ENCODE measurements at regions of chr13 and their contacts with region 1.

Region 1: DNA sequence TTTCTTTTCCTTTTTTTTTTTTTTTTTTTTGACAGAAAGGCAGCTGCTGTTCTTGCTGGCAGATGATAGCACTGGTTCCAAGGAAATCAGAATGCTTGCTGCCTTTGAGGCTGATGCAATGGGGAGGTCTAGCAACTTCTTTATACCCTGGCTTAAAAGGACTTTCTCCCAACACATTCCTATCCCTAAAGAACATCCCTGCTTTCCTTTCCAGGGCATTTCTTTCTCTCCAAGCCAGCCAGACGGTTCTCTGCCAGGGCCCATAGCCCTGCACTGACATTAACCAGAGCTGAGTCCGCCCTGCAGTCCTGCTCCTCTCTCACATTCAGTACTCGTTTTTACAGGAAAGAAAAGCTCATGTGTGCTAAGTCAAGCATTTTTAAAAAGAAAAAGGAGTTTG is 133.9 kb upstream of the WASF3 start:
- DNase-seq: peak; percentile 72
- ATAC-seq: peak; percentile 93

Region 2: DNA sequence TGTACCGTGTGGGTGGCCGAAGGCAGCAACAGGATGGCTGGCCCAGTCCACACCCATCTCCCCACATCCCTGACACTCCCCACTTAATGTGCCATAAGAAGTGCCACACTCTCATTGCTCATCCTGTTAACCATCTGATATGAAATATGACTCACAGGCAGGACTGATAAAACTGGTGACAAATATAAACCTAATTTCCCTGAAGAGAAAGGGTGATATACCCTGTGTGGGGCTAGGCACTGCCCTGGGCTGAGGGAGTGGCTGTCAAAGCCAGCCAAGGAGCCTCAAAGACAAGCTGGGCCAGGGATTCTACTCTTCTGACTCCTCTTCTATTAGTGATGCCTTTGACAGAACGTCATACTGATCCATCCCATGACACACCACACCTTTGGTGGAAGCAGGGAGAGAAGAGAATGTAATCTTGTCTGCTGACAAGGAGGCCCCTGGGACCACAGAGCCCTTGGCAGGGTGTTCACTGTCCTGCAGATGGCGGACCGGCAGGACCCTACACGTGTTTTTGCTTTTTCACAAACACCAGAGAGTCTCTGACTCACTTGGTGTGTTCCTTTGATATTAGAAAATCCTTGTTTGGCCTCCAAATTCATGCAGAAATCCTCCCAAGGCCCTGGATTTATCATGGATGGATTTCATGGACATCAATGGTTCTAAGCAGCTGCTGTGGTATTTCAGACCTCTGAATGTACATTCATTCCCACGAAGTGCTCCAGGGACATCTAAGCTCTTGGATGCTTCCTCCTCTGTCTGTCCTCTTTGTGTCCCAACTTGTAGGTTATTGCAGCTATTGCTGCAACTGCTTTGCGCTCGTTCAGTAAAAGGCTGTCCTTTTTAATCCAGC is 35.9 kb after region 1 on chr13:
- intact Hi-C with region 1: loop called (anchors 5 kb)
- DNase-seq: peak; percentile 80
- ATAC-seq: peak; percentile 74

Region 3: GRCh38 chr13:26628706-26629105 is 205.1 kb after region 1 on chr13:
- intact Hi-C with region 1: no loop called
- DNase-seq: peak; percentile 61
- ATAC-seq: peak; percentile 59

Region 4: GRCh38 chr13:26965952-26966700 is 542.5 kb after region 1 on chr13:
- intact Hi-C with region 1: no loop called
- DNase-seq: peak; percentile 85
- ATAC-seq: peak; percentile 63